ENCODE measurements at regions of chr9 and their contacts with region 1.

Region 1: GRCh38 chr9:92140074-92140753 is 25.0 kb upstream of the SPTLC1 start:
- DNase-seq: no peak
- H3K4me3 ChIP-seq: peak overlapping the region; percentile 86
- H3K27ac ChIP-seq: peak overlapping the region; percentile 39
- H3K27me3 ChIP-seq: no peaks in the 10 kb centered on the region
- CTCF ChIP-seq: peak; percentile 92

Region 2: GRCh38 chr9:92100574-92100911 is 39.7 kb before region 1 on chr9:
- CTCF ChIA-PET with region 1: no interaction called
- POLR2A ChIA-PET with region 1: no interaction called
- DNase-seq: peak; percentile 29
- H3K4me3 ChIP-seq: no peak overlapping the region
- H3K27ac ChIP-seq: no peak overlapping the region
- H3K27me3 ChIP-seq: no peaks in the 10 kb centered on the region
- CTCF ChIP-seq: no peak

Region 3: DNA sequence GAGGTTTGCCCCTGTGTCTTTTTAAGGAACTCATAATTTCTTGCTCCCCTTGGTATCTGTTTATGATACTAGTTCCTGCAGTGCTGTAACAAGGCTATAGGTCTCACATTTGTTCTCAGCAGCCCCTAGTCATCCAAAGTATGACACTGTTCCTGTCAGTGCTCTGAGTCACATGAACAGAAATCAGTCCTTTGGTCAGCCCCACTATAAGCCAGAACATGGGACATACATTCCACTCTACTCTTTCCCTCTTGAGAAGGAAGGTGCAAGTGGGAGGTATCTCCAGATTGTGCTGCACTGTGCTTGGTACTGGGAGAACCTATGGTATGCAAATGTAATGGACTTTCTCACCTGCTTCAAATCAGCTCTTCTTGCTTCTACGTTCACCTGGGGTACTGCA is 66.3 kb after region 1 on chr9:
- CTCF ChIA-PET with region 1: interaction called, 22 read pairs
- POLR2A ChIA-PET with region 1: no interaction called
- DNase-seq: no peak
- H3K4me3 ChIP-seq: no peak overlapping the region
- H3K27ac ChIP-seq: peak overlapping the region; percentile 11
- H3K27me3 ChIP-seq: no peaks in the 10 kb centered on the region
- CTCF ChIP-seq: no peak

Region 4: DNA sequence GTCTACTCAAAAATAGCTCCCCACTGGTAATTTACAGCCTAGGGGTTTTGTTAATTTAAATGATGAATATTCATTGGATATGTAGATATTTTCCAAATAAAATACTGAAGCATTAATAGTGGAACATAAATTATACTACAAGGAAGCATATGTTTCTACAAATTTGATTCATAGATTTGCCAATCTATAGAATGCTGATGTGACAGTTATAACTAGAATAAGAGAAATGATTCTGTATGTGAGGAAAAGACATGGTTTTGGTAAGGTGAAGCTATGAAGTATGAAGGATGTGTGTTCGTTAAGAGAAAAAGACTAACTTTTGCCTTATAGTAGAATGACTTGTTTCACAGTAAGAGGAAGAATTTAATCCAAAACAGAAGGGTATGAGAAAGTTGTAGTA is 92.0 kb after region 1 on chr9:
- CTCF ChIA-PET with region 1: interaction called, 10 read pairs
- POLR2A ChIA-PET with region 1: no interaction called
- DNase-seq: no peak
- H3K4me3 ChIP-seq: no peak overlapping the region
- H3K27ac ChIP-seq: no peak overlapping the region
- H3K27me3 ChIP-seq: no peaks in the 10 kb centered on the region
- CTCF ChIP-seq: no peak

Region 5: DNA sequence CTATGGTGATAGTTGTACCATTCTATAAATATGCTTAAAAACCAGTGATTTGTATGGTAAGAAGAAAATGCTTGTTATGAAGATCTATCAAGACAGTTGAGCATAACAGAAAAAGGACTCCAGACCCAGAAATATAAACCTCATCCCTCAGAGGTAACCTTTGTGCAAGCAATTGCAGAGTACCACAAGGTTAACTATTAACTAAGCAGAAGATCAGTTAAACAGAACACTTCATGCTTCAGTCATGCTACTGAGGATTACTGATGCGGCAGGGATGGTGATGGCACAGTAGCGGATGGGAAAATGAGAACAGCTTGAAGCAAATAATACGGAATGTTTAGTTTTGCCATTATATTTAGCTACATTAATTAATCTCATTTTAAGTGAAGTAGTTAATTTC is 107.8 kb after region 1 on chr9:
- CTCF ChIA-PET with region 1: interaction called, 370 read pairs
- POLR2A ChIA-PET with region 1: interaction called, 15 read pairs
- DNase-seq: no peak
- H3K4me3 ChIP-seq: no peak overlapping the region
- H3K27ac ChIP-seq: no peak overlapping the region
- H3K27me3 ChIP-seq: no peaks in the 10 kb centered on the region
- CTCF ChIP-seq: no peak

Region 6: GRCh38 chr9:92276331-92277032 is 136.3 kb after region 1 on chr9:
- CTCF ChIA-PET with region 1: interaction called, 57 read pairs
- POLR2A ChIA-PET with region 1: no interaction called
- DNase-seq: no peak
- H3K4me3 ChIP-seq: no peak overlapping the region
- H3K27ac ChIP-seq: no peak overlapping the region
- H3K27me3 ChIP-seq: no peaks in the 10 kb centered on the region
- CTCF ChIP-seq: no peak

Region 7: GRCh38 chr9:92300935-92301334 is 160.7 kb after region 1 on chr9:
- CTCF ChIA-PET with region 1: interaction called, 10 read pairs
- POLR2A ChIA-PET with region 1: no interaction called
- DNase-seq: no peak
- H3K4me3 ChIP-seq: no peak overlapping the region
- H3K27ac ChIP-seq: no peak overlapping the region
- H3K27me3 ChIP-seq: no peaks in the 10 kb centered on the region
- CTCF ChIP-seq: no peak

Region 8: DNA sequence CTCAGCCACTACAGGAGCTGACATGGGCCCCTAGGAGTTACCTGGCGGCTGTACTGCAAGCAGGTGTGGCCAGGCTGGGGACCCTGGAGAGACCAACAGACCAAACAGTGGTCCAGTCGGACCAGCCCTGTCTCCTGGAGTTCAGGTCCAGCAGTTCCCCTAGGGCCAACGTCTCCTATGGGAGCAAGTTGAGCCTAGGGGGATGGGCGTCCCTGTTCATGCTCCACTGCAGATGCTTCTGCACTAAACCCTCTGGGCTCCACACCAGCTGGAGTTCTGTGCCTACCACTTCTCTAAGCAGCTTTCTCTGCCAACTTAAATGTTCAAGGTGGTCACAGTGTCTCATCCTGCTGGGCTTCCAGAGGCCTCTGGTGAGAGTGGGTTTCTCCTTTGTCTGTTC is 304.6 kb after region 1 on chr9:
- CTCF ChIA-PET with region 1: interaction called, 10 read pairs
- POLR2A ChIA-PET with region 1: no interaction called
- DNase-seq: no peak
- H3K4me3 ChIP-seq: no peak overlapping the region
- H3K27ac ChIP-seq: no peak overlapping the region
- H3K27me3 ChIP-seq: no peaks in the 10 kb centered on the region
- CTCF ChIP-seq: no peak

Measured in AG04450 (cell line).